ENCODE measurements at regions of chr10 and their contacts with region 1.

Region 1: GRCh38 chr10:125719146-125720001 is at the start of gene EDRF1:
- DNase-seq: peak; percentile 98
- ATAC-seq: peak; percentile 99
- H3K4me3 ChIP-seq: peak within 1 kb of the TSS; percentile 79
- H3K27ac ChIP-seq: peak within 1 kb of the TSS; percentile 83
- H3K4me1 ChIP-seq: no peaks in the 10 kb centered on the region; the same call in 1 of the 2 replicates
- H3K27me3 ChIP-seq: no peaks in the 10 kb centered on the region
- CTCF ChIP-seq: no peak
- POLR2A ChIP-seq: peak; percentile 91
- RAD21 ChIP-seq: peak; percentile 7; the same call in 1 of the 2 replicates
- total RNA-seq, gene EDRF1: 24.9 and 28.1 TPM in 2 replicates

Region 2: GRCh38 chr10:124992462-124993344 is 726.7 kb before region 1 on chr10:
- CTCF ChIA-PET with region 1: no interaction called
- POLR2A ChIA-PET with region 1: no interaction called
- dilution Hi-C with region 1: no loop called
- in situ Hi-C with region 1: no loop called
- intact Hi-C with region 1: loop called (anchors 10 kb)
- DNase-seq: peak; percentile 63
- ATAC-seq: peak; percentile 74
- H3K4me3 ChIP-seq: no peak overlapping the region
- H3K27ac ChIP-seq: no peak overlapping the region
- H3K4me1 ChIP-seq: no peaks in the 10 kb centered on the region
- H3K27me3 ChIP-seq: no peaks in the 10 kb centered on the region
- CTCF ChIP-seq: peak; percentile 47
- POLR2A ChIP-seq: no peak
- RAD21 ChIP-seq: peak; percentile 55

Region 3: GRCh38 chr10:125231116-125231812 is 488.1 kb before region 1 on chr10:
- CTCF ChIA-PET with region 1: no interaction called
- POLR2A ChIA-PET with region 1: no interaction called
- dilution Hi-C with region 1: no loop called
- in situ Hi-C with region 1: no loop called
- intact Hi-C with region 1: loop called (anchors 5 kb)
- DNase-seq: peak; percentile 98
- ATAC-seq: peak; percentile 96
- H3K4me3 ChIP-seq: no peak overlapping the region
- H3K27ac ChIP-seq: peak overlapping the region; percentile 46
- H3K4me1 ChIP-seq: peaks cover 12% of the 10 kb centered on the region
- H3K27me3 ChIP-seq: no peaks in the 10 kb centered on the region
- CTCF ChIP-seq: peak; percentile 23; the same call in 1 of the 2 replicates
- POLR2A ChIP-seq: no peak; the same call in 1 of the 2 replicates
- RAD21 ChIP-seq: peak; percentile 39

Region 4: GRCh38 chr10:125411724-125412123 is 307.6 kb before region 1 on chr10:
- CTCF ChIA-PET with region 1: no interaction called
- POLR2A ChIA-PET with region 1: no interaction called
- dilution Hi-C with region 1: no loop called
- in situ Hi-C with region 1: no loop called
- intact Hi-C with region 1: no loop called
- DNase-seq: peak; percentile 96
- ATAC-seq: peak; percentile 48; the same call in 1 of the 2 replicates
- H3K4me3 ChIP-seq: no peak overlapping the region
- H3K27ac ChIP-seq: no peak overlapping the region
- H3K4me1 ChIP-seq: no peaks in the 10 kb centered on the region
- H3K27me3 ChIP-seq: no peaks in the 10 kb centered on the region
- CTCF ChIP-seq: no peak
- POLR2A ChIP-seq: no peak
- RAD21 ChIP-seq: no peak

Region 5: DNA sequence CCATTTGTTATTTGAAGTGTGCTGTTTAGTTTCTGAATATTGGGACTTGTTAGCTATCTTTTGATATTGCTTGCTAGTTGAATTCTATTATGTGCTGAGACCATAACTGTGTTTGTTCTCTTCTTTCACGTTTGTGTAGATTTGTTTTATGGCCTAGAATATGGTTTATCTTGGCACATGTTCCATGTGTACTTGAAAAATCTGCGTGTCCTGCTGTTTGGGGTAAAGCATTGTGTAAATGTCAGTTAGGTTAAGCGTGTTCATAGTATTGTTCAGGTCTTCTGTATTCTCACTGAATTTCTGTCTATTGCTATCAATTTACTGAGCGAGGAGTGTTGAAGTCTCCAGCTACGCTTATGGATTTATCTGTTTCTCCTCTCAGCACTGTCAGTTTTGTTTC is 36.8 kb after region 1 on chr10:
- CTCF ChIA-PET with region 1: no interaction called
- POLR2A ChIA-PET with region 1: no interaction called
- dilution Hi-C with region 1: no loop called
- in situ Hi-C with region 1: no loop called
- intact Hi-C with region 1: loop called (anchors 5 kb)
- DNase-seq: no peak
- ATAC-seq: no peak
- H3K4me3 ChIP-seq: no peak overlapping the region
- H3K27ac ChIP-seq: no peak overlapping the region
- H3K4me1 ChIP-seq: no peaks in the 10 kb centered on the region
- H3K27me3 ChIP-seq: no peaks in the 10 kb centered on the region
- CTCF ChIP-seq: no peak
- POLR2A ChIP-seq: no peak
- RAD21 ChIP-seq: no peak

Region 6: DNA sequence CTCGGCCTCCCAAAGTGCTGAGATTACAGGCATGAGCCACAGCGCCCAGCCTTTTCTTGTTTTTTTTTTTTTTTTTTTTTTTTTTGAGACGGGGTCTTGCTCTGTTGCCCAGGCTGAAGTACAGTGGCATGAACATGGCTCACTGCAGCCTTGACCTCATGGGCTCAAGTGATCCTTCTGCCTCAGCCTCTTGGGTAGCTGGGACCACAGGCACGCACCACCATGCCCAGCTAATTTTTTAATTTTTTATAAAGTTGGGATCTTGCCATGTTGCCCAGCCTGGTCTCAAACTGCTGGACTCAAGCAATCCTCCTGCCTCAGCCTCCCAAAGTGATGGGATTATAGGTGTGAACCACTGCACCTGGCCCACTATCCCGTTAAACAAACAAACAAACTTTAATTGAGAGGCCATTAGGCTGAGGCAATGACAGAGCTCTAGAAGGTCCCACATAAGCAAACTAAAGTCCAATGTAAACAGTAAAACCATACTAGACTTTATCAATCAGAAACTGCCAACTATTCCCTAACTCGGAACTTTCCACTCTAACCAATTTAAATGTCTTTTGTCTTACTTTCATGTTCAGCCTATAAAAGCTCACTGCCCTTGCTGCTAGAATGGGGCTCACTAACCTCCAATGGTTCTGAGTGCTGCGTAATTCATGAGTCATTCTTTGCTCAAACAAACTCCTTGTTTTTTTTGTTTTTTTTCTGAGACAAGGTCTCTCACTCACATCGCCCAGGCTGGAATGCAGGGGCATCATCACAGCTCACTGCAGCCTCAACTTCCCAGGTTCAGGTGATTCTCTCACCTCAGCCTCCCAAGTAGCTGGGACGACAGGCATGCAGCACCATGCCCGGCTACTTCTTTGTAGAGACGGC is 159.8 kb after region 1 on chr10:
- CTCF ChIA-PET with region 1: no interaction called
- POLR2A ChIA-PET with region 1: no interaction called
- dilution Hi-C with region 1: no loop called
- in situ Hi-C with region 1: no loop called
- intact Hi-C with region 1: no loop called
- DNase-seq: peak; percentile 96
- ATAC-seq: peak; percentile 95
- H3K4me3 ChIP-seq: no peak overlapping the region
- H3K27ac ChIP-seq: peak overlapping the region; percentile 62; the same call in 1 of the 2 replicates
- H3K4me1 ChIP-seq: peaks cover 10% of the 10 kb centered on the region
- H3K27me3 ChIP-seq: no peaks in the 10 kb centered on the region
- CTCF ChIP-seq: no peak
- POLR2A ChIP-seq: no peak
- RAD21 ChIP-seq: no peak

Measured in IMR-90 (cell line).